MCF 10A (cell line): ENCODE measurements at regions of chr2 and their contacts with region 1.

Region 1: DNA sequence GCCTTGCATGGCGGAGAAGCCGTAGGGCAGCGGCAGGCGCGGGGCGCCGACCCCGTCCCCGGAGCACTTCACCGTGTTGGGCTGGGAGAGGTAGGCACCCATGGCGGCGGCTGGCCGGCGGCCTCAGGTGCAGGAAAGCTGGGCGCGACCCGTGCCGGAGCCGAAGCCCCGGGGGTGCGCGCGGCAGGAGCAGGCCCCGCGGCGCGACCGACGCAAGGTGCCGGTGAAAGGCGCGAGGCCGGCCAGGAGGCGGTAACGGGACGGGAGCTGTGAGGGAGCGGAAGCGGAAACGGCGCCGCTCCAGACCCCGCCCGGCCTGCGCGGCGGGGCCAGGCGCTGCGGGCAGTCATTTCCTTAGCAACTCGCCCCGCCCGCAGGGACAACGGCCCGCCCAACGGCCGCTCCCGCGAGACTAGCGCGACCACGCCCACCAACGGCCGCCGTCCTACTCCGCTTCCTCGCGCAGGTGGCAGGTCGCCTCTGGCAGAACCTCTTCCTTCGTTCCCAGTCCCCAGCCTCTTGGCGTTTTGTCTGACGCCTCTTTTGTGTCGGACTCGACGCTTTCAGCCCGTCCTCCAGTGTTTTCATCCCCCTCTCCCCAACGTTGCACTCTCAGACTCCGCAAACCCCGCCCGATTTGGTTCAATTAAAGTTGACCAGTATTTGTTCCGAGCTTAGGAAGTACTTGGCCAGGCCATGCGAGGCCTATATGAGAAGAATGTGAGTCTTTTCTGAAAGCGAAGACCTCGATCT is at the start of gene PPM1G:
- DNase-seq: peak; percentile 91
- H3K4me3 Mint-ChIP-seq: peak within 1 kb of the TSS; percentile 77
- H3K27ac Mint-ChIP-seq: peak within 1 kb of the TSS; percentile 78
- H3K4me1 Mint-ChIP-seq: peaks cover 15% of the 10 kb centered on the region
- H3K27me3 Mint-ChIP-seq: no peaks in the 10 kb centered on the region
- CTCF ChIP-seq: no peak
- total RNA-seq, gene PPM1G: 85.7 and 123 TPM in 2 replicates

Region 2: DNA sequence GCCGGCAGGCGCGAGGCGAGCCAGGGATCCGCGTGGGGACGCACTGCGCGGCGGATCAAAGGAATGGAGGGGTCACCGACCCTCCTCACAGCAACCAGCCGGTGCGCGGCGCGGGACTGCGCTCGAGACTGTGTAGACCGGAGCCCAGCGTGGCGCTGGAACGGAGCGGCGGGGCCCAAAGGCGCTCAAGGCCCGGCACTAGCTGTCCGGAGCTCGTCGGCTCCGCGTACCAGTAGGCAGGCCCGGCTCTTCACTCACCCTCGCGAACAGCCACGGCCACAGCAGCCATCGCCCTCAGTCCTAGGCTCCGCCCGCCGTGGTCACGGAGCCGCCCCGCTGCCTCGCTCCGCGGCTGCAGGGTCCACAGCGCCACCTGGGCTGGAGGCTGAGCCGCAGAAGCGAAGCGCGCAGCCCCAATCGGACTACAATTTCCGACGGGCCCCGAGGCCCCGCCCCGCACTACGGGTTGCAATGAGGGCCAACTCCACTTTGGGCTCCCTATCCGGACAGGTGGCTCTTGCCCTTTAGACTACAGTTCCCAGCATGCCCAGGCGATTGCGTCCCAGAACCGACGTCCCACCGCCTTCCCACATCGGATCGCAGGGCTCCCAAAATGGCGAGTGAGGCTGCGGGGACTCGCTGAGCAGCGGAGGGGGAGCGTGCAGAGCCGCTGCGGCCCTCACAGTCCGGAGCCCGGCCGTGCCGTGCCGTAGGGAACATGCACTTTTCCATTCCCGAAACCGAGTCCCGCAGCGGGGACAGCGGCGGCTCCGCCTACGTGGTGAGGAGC is 39.3 kb before region 1 on chr2 and contains the starts of genes EIF2B4 and SNX17:
- CTCF ChIA-PET with region 1: interaction called, 4 read pairs
- POLR2A ChIA-PET with region 1: interaction called, 16 read pairs
- intact Hi-C with region 1: no loop called
- DNase-seq: peak; percentile 99
- H3K4me3 Mint-ChIP-seq: peak within 1 kb of the TSS; percentile 86
- H3K27ac Mint-ChIP-seq: peak within 1 kb of the TSS; percentile 81
- H3K4me1 Mint-ChIP-seq: peaks cover 21% of the 10 kb centered on the region
- H3K27me3 Mint-ChIP-seq: no peaks in the 10 kb centered on the region
- CTCF ChIP-seq: peak; percentile 69
- total RNA-seq, gene EIF2B4: 42.7 and 50.1 TPM in 2 replicates
- total RNA-seq, gene SNX17: 101 and 125 TPM in 2 replicates

Region 3: GRCh38 chr2:27421028-27421427 is 11.5 kb after region 1 on chr2:
- CTCF ChIA-PET with region 1: no interaction called
- POLR2A ChIA-PET with region 1: interaction called, 205 read pairs
- intact Hi-C with region 1: no loop called
- DNase-seq: no peak
- H3K4me3 Mint-ChIP-seq: no peak overlapping the region
- H3K27ac Mint-ChIP-seq: no peak overlapping the region
- H3K4me1 Mint-ChIP-seq: no peaks in the 10 kb centered on the region
- H3K27me3 Mint-ChIP-seq: no peaks in the 10 kb centered on the region
- CTCF ChIP-seq: no peak

Region 4: GRCh38 chr2:27441958-27442919 is 32.7 kb after region 1 on chr2 and contains the start of gene KRTCAP3:
- CTCF ChIA-PET with region 1: interaction called, 5 read pairs
- POLR2A ChIA-PET with region 1: interaction called, 27 read pairs
- intact Hi-C with region 1: no loop called
- DNase-seq: peak; percentile 35
- H3K4me3 Mint-ChIP-seq: no peak within 1 kb of the TSS
- H3K27ac Mint-ChIP-seq: peak within 1 kb of the TSS; percentile 12
- H3K4me1 Mint-ChIP-seq: peaks cover 9% of the 10 kb centered on the region
- H3K27me3 Mint-ChIP-seq: no peaks in the 10 kb centered on the region
- CTCF ChIP-seq: no peak
- total RNA-seq, gene KRTCAP3: 4.1 and 6.9 TPM in 2 replicates

Region 5: GRCh38 chr2:27628767-27629709 is 219.5 kb after region 1 on chr2 and contains the starts of genes CCDC121 and GPN1:
- CTCF ChIA-PET with region 1: no interaction called
- POLR2A ChIA-PET with region 1: interaction called, 58 read pairs
- intact Hi-C with region 1: loop called (anchors 10 kb)
- DNase-seq: peak; percentile 90
- H3K4me3 Mint-ChIP-seq: no peak within 1 kb of the TSS
- H3K27ac Mint-ChIP-seq: no peak within 1 kb of the TSS
- H3K4me1 Mint-ChIP-seq: peaks cover 17% of the 10 kb centered on the region
- H3K27me3 Mint-ChIP-seq: no peaks in the 10 kb centered on the region
- CTCF ChIP-seq: no peak
- total RNA-seq, gene CCDC121: 0.61 and 2.3 TPM in 2 replicates
- total RNA-seq, gene GPN1: 28.6 and 30.5 TPM in 2 replicates

Region 6: GRCh38 chr2:27683390-27684071 is 274.0 kb after region 1 on chr2:
- CTCF ChIA-PET with region 1: interaction called, 29 read pairs
- POLR2A ChIA-PET with region 1: interaction called, 24 read pairs
- intact Hi-C with region 1: loop called (anchors 1 kb)
- DNase-seq: peak; percentile 94
- H3K4me3 Mint-ChIP-seq: peak overlapping the region; percentile 35
- H3K27ac Mint-ChIP-seq: peak overlapping the region; percentile 59
- H3K4me1 Mint-ChIP-seq: peaks cover 29% of the 10 kb centered on the region
- H3K27me3 Mint-ChIP-seq: no peaks in the 10 kb centered on the region
- CTCF ChIP-seq: peak; percentile 99

Region 7: DNA sequence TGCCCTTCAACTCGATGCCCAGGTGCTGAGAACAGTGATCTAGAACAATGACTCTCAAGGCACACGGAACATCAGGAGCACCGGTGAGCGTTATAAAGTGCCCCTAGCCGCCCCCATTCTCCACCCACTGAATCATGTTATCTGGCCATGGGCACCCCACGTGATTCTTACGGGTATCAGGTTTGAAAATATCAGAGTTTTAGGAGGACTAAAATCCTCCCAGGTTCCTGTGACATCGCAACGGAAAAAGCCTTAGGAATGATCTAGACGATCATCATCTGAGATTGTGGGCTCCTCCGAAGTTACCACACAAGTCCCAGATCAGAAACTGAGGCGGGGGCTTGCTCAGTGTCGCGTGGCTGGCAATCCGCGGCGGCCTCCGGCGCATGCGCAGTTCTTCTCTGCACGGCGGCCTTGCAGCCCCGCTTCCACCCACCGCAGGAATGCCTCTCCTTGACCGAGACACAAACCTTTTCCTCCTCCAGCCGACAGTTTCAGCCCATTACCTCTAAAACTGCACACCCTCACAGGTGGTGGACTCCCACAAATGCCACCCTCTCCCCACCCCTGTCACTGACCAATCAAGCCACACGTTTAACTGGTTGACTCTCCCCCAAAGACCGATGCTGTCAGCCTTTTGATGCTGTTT is 356.2 kb after region 1 on chr2:
- CTCF ChIA-PET with region 1: no interaction called
- POLR2A ChIA-PET with region 1: no interaction called
- intact Hi-C with region 1: no loop called
- DNase-seq: no peak
- H3K4me3 Mint-ChIP-seq: no peak overlapping the region
- H3K27ac Mint-ChIP-seq: no peak overlapping the region
- H3K4me1 Mint-ChIP-seq: peaks cover 23% of the 10 kb centered on the region
- H3K27me3 Mint-ChIP-seq: no peaks in the 10 kb centered on the region
- CTCF ChIP-seq: no peak

Region 8: GRCh38 chr2:28445448-28446258 is 1036.2 kb after region 1 on chr2:
- CTCF ChIA-PET with region 1: no interaction called
- POLR2A ChIA-PET with region 1: no interaction called
- intact Hi-C with region 1: no loop called
- DNase-seq: peak; percentile 99
- H3K4me3 Mint-ChIP-seq: peak overlapping the region; percentile 20
- H3K27ac Mint-ChIP-seq: peak overlapping the region; percentile 11
- H3K4me1 Mint-ChIP-seq: peaks cover 54% of the 10 kb centered on the region
- H3K27me3 Mint-ChIP-seq: no peaks in the 10 kb centered on the region
- CTCF ChIP-seq: no peak